ENCODE measurements at regions of chr19 and their contacts with region 1.

Region 1: GRCh38 chr19:41753936-41754529 is 1.3 kb upstream of the CEACAM6 start:
- DNase-seq: peak; percentile 77
- H3K4me3 Mint-ChIP-seq: no peak overlapping the region
- H3K27ac Mint-ChIP-seq: no peak overlapping the region
- H3K4me1 Mint-ChIP-seq: peaks cover 3% of the 10 kb centered on the region
- H3K27me3 Mint-ChIP-seq: peaks cover 36% of the 10 kb centered on the region

Region 2: DNA sequence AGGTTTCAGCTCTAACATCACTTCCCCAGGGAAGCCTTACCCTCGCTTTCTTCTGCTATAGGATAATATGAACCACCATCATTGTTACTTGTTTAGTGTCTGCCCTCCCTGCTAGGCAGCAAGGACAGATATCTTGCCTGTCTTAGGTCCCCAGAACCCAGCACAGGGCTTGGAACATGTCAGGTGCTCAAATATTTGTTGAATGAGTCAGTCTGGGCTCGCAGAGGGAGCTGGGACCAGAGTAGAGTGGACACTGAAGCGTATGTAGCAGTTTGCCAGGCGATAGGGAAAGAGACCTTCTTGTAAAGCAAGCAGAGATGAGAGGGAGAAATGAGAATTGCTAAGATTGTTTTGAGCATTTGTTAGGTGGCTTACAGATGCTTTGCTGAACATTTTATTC is 344.7 kb before region 1 on chr19:
- CTCF ChIA-PET with region 1: no interaction called
- POLR2A ChIA-PET with region 1: no interaction called
- DNase-seq: no peak
- H3K4me3 Mint-ChIP-seq: no peak overlapping the region
- H3K27ac Mint-ChIP-seq: no peak overlapping the region
- H3K4me1 Mint-ChIP-seq: peaks cover 11% of the 10 kb centered on the region
- H3K27me3 Mint-ChIP-seq: no peaks in the 10 kb centered on the region

Region 3: GRCh38 chr19:41495589-41495988 is 258.4 kb before region 1 on chr19:
- CTCF ChIA-PET with region 1: no interaction called
- POLR2A ChIA-PET with region 1: no interaction called
- DNase-seq: no peak
- H3K4me3 Mint-ChIP-seq: no peak overlapping the region
- H3K27ac Mint-ChIP-seq: no peak overlapping the region
- H3K4me1 Mint-ChIP-seq: no peaks in the 10 kb centered on the region
- H3K27me3 Mint-ChIP-seq: peaks cover 16% of the 10 kb centered on the region

Region 4: DNA sequence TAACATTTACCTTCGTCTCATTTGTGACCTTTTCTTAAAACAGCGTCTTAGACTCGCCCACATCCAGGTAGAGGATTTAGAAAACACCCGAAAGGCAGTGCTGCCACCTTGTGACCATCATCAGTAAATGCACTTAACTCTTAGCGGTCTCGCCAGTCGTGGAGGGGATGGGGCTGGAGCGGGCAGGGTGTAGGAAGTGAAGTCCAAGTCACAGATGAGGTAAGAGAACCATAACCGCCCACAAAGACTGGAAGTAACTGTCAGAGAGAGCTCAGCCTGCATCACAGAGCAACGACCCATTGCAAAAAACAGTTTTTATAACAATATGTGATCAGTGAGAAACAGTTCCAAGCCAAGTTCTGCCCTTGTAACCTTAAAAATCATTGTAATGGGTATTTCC is 31.6 kb after region 1 on chr19:
- CTCF ChIA-PET with region 1: interaction called, 22 read pairs
- POLR2A ChIA-PET with region 1: no interaction called
- DNase-seq: peak; percentile 85
- H3K4me3 Mint-ChIP-seq: no peak overlapping the region
- H3K27ac Mint-ChIP-seq: no peak overlapping the region
- H3K4me1 Mint-ChIP-seq: peaks cover 17% of the 10 kb centered on the region
- H3K27me3 Mint-ChIP-seq: peaks cover 53% of the 10 kb centered on the region